K562 (cell line): ENCODE measurements at regions of chr6 and their contacts with region 1.

Region 1: GRCh38 chr6:92753956-92754355 is 665.4 kb downstream of the EPHA7 start:
- DNase-seq: no peak
- ATAC-seq: no peak
- H3K4me3 ChIP-seq: no peak overlapping the region
- H3K27ac ChIP-seq: no peak overlapping the region
- H3K4me1 ChIP-seq: no peaks in the 10 kb centered on the region
- H3K27me3 ChIP-seq: no peaks in the 10 kb centered on the region
- CTCF ChIP-seq: no peak
- EP300 ChIP-seq: no peak
- POLR2A ChIP-seq: no peak
- RAD21 ChIP-seq: no peak

Region 2: DNA sequence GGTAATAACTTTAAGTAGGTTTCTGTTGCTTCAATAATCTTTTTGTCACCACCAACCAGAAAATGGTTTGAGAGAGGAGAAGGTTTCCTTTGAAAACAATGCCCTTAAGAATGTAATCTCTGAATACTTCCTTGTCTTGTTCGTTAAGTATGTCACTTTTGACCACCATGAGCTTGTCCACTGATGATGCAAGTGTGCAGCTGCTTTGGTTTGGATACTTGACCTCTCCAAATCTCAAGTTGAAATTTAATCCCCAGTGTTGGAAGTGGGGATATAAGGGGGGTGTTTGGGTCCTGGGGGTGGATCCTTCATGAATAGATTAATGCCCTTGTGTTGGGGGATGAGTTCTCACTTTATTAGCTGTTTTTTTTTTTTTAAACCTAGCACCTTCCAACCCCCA is 320.0 kb before region 1 on chr6:
- CTCF ChIA-PET with region 1: no interaction called
- POLR2A ChIA-PET with region 1: no interaction called
- in situ Hi-C with region 1: loop called (anchors 5 kb)
- intact Hi-C with region 1: no loop called
- DNase-seq: no peak
- ATAC-seq: no peak
- H3K4me3 ChIP-seq: no peak overlapping the region
- H3K27ac ChIP-seq: no peak overlapping the region
- H3K4me1 ChIP-seq: no peaks in the 10 kb centered on the region
- H3K27me3 ChIP-seq: no peaks in the 10 kb centered on the region
- CTCF ChIP-seq: no peak
- EP300 ChIP-seq: no peak
- POLR2A ChIP-seq: no peak
- RAD21 ChIP-seq: no peak

Region 3: GRCh38 chr6:92608751-92609150 is 145.2 kb before region 1 on chr6:
- CTCF ChIA-PET with region 1: no interaction called
- POLR2A ChIA-PET with region 1: no interaction called
- in situ Hi-C with region 1: no loop called
- intact Hi-C with region 1: no loop called
- DNase-seq: no peak
- ATAC-seq: no peak
- H3K4me3 ChIP-seq: no peak overlapping the region
- H3K27ac ChIP-seq: no peak overlapping the region
- H3K4me1 ChIP-seq: no peaks in the 10 kb centered on the region
- H3K27me3 ChIP-seq: no peaks in the 10 kb centered on the region
- CTCF ChIP-seq: no peak
- EP300 ChIP-seq: no peak
- POLR2A ChIP-seq: no peak
- RAD21 ChIP-seq: no peak

Region 4: GRCh38 chr6:92826633-92827032 is 72.7 kb after region 1 on chr6:
- CTCF ChIA-PET with region 1: no interaction called
- POLR2A ChIA-PET with region 1: no interaction called
- in situ Hi-C with region 1: no loop called
- intact Hi-C with region 1: no loop called
- DNase-seq: no peak
- ATAC-seq: no peak
- H3K4me3 ChIP-seq: no peak overlapping the region
- H3K27ac ChIP-seq: no peak overlapping the region
- H3K4me1 ChIP-seq: no peaks in the 10 kb centered on the region
- H3K27me3 ChIP-seq: no peaks in the 10 kb centered on the region
- CTCF ChIP-seq: no peak
- EP300 ChIP-seq: no peak
- POLR2A ChIP-seq: no peak
- RAD21 ChIP-seq: no peak